Kidney (tissue), 22 donors: ENCODE measurements at regions of chr18 and their contacts with region 1.

Region 1: GRCh38 chr18:70195852-70196434 is 9.5 kb downstream of the RTTN start:
- DNase-seq: peak in 3 of 5 donors; percentile 21 to 55 (median 55)
- H3K4me3 ChIP-seq: peak overlapping the region in 2 of 3 donors; percentile 36 to 59
- H3K27ac ChIP-seq: no peak overlapping the region
- H3K4me1 ChIP-seq: no peaks in the 10 kb centered on the region
- H3K27me3 ChIP-seq: no peaks in the 10 kb centered on the region
- CTCF ChIP-seq: peak; percentile 71

Region 2: GRCh38 chr18:70431203-70431624 is 235.3 kb after region 1 on chr18:
- intact Hi-C with region 1: loop called (anchors 5 kb)
- DNase-seq: no peak
- H3K4me3 ChIP-seq: no peak overlapping the region
- H3K27ac ChIP-seq: no peak overlapping the region
- H3K4me1 ChIP-seq: no peaks in the 10 kb centered on the region
- H3K27me3 ChIP-seq: no peaks in the 10 kb centered on the region
- CTCF ChIP-seq: no peak

Region 3: GRCh38 chr18:70442933-70443332 is 247.0 kb after region 1 on chr18:
- intact Hi-C with region 1: loop called (anchors 5 kb)
- DNase-seq: no peak
- H3K4me3 ChIP-seq: no peak overlapping the region
- H3K27ac ChIP-seq: no peak overlapping the region
- H3K4me1 ChIP-seq: no peaks in the 10 kb centered on the region
- H3K27me3 ChIP-seq: no peaks in the 10 kb centered on the region
- CTCF ChIP-seq: no peak